ENCODE measurements at regions of chr15 and their contacts with region 1.

Region 1: GRCh38 chr15:42427429-42428223 is 63.3 kb downstream of the ZNF106 start:
- DNase-seq: peak; percentile 75
- H3K4me3 ChIP-seq: no peak overlapping the region
- CTCF ChIP-seq: no peak

Region 2: GRCh38 chr15:41564286-41564959 is 863.2 kb before region 1 on chr15:
- in situ Hi-C with region 1: no loop called
- DNase-seq: no peak
- H3K4me3 ChIP-seq: no peak overlapping the region
- CTCF ChIP-seq: no peak

Region 3: GRCh38 chr15:42157981-42158765 is 269.5 kb before region 1 on chr15:
- in situ Hi-C with region 1: loop called (anchors 25 kb)
- DNase-seq: peak; percentile 60
- H3K4me3 ChIP-seq: no peak overlapping the region
- CTCF ChIP-seq: no peak

Region 4: GRCh38 chr15:42273102-42273899 is 154.3 kb before region 1 on chr15 and contains the starts of genes GANC and TMEM87A:
- in situ Hi-C with region 1: loop called (anchors 25 kb)
- DNase-seq: peak; percentile 97
- H3K4me3 ChIP-seq: peak within 1 kb of the TSS; percentile 71
- CTCF ChIP-seq: no peak

Region 5: GRCh38 chr15:42385206-42385979 is 42.2 kb before region 1 on chr15:
- in situ Hi-C with region 1: no loop called
- DNase-seq: peak; percentile 5
- H3K4me3 ChIP-seq: no peak overlapping the region
- CTCF ChIP-seq: peak; percentile 67

Region 6: DNA sequence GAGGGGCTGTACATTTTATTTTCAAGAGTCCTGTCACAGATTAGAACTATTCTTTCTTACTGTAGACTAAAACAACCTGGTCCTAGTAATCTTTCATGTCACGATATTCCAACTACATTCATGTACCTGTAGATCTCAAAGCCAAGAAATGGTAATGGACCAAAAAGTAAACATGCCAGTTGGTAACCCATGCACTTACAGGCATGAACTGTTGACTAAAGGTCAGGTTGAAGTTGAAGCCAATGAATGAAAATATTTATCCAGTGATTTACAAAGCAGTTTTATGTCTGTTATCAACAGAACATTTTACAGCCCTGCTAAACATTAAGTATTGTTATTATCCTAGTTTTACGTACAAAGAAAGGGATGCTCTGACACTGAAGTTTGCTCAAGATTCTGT is 95.7 kb after region 1 on chr15:
- in situ Hi-C with region 1: no loop called
- DNase-seq: no peak
- H3K4me3 ChIP-seq: no peak overlapping the region
- CTCF ChIP-seq: no peak